HepG2 (cell line): ENCODE measurements at regions of chr3 and their contacts with region 1.

Region 1: DNA sequence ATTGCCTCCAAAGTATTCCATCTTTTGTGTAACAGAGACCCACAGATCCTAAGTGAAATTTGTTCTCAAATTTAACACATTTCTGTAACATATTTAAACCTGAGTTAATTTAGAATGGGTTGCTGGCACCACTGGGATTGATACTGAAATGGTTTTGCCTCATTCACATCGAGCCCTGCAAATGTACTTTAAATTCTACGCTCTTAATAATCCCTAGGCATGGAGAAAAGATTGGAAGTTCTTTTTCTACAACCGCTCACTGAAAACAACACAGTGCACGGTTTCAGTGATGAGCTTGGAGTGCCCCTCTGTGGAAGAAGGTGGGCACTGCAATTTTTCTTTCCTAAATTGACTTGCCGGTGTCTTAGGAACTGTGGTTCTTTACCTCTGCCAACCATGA is 109.9 kb upstream of the ATP11B start:
- DNase-seq: peak; percentile 48
- ATAC-seq: peak; percentile 83
- H3K4me3 ChIP-seq: peak overlapping the region in 1 of 3 experiments; percentile 61; a peak in 1 of 6 replicates
- H3K27ac ChIP-seq: no peak overlapping the region
- H3K4me1 ChIP-seq: peaks cover 7% of the 10 kb centered on the region
- H3K27me3 ChIP-seq: peaks cover 4 to 14% of the 10 kb centered on the region in 2 experiments; a peak in 3 of 5 replicates
- CTCF ChIP-seq: peak; percentile 86
- EP300 ChIP-seq: no peak
- POLR2A ChIP-seq: no peak
- RAD21 ChIP-seq: peak; percentile 78

Region 2: DNA sequence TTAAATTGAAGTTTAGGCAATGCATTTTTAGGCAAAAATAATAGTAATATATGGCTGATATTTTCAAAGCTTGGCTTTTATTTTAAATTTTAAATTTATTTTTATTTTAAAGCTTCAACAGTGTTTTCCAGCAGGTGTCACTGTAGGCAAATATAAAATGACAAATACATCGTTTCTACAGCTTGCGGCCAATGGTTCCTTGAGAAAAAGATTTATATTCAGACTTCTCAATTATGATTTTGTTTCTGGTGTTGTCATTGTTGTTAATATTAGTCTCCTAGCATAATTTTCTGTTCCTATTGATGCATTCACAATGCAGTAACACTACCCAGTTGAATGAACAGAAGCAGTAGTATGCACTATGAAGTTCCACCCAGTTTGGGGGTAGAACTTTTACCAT is 1473.2 kb before region 1 on chr3:
- CTCF ChIA-PET with region 1: interaction called, 7 read pairs
- POLR2A ChIA-PET with region 1: no interaction called
- in situ Hi-C with region 1: no loop called
- intact Hi-C with region 1: loop called (anchors 2 kb)
- DNase-seq: peak; percentile 4
- ATAC-seq: no peak
- H3K4me3 ChIP-seq: no peak overlapping the region
- H3K27ac ChIP-seq: no peak overlapping the region
- H3K4me1 ChIP-seq: no peaks in the 10 kb centered on the region
- H3K27me3 ChIP-seq: no peaks in the 10 kb centered on the region
- CTCF ChIP-seq: no peak
- EP300 ChIP-seq: no peak
- POLR2A ChIP-seq: no peak
- RAD21 ChIP-seq: no peak

Region 3: GRCh38 chr3:181326637-181327223 is 1356.7 kb before region 1 on chr3:
- CTCF ChIA-PET with region 1: interaction called, 6 read pairs
- POLR2A ChIA-PET with region 1: no interaction called
- in situ Hi-C with region 1: no loop called
- intact Hi-C with region 1: loop called (anchors 1 kb)
- DNase-seq: peak; percentile 18
- ATAC-seq: peak; percentile 53; the same call in 2 of the 3 replicates
- H3K4me3 ChIP-seq: no peak overlapping the region
- H3K27ac ChIP-seq: no peak overlapping the region
- H3K4me1 ChIP-seq: no peaks in the 10 kb centered on the region
- H3K27me3 ChIP-seq: no peaks in the 10 kb centered on the region
- CTCF ChIP-seq: peak; percentile 59
- EP300 ChIP-seq: no peak
- POLR2A ChIP-seq: no peak
- RAD21 ChIP-seq: no peak

Region 4: GRCh38 chr3:181709537-181710279 is 973.7 kb before region 1 on chr3:
- CTCF ChIA-PET with region 1: interaction called, 8 read pairs
- POLR2A ChIA-PET with region 1: no interaction called
- in situ Hi-C with region 1: loop called (anchors 5 kb)
- intact Hi-C with region 1: loop called (anchors 1 kb)
- DNase-seq: peak; percentile 19
- ATAC-seq: no peak
- H3K4me3 ChIP-seq: no peak overlapping the region
- H3K27ac ChIP-seq: no peak overlapping the region
- H3K4me1 ChIP-seq: peaks cover 11% of the 10 kb centered on the region; the same call in 1 of the 2 replicates
- H3K27me3 ChIP-seq: peaks cover 4 to 46% of the 10 kb centered on the region in 2 experiments; a peak in 4 of 5 replicates
- CTCF ChIP-seq: peak; percentile 70
- EP300 ChIP-seq: no peak
- POLR2A ChIP-seq: no peak
- RAD21 ChIP-seq: peak; percentile 26; the same call in 1 of the 2 replicates

Region 5: DNA sequence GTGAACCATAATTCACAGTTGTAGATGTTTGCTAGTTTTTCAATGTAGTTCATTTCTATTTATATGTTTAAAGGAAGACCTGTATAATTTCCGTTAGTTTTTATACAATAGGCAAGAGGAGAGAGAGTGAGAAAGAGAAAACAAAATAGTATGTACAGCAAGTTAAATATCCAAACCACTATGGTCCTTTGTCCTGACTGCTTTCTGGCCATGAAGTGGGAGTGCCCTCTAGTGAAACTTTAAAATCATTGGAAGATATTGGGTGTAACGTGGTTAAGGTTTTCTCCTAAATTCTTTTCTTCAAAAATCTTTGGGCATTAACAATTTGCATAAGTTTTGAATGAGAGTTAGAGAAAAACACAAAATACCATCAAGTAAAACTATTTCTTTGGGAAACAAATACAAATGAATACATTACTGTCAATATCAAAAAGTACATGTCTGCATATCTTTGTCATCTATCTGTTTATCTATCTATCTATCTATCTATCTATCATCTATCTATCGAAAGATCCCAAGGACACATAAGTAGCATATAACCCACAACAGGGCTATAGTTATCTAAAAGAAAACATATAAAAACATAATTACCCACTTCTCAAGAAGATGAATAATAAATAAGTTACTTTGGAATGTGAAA is 424.8 kb before region 1 on chr3:
- CTCF ChIA-PET with region 1: no interaction called
- POLR2A ChIA-PET with region 1: no interaction called
- in situ Hi-C with region 1: no loop called
- intact Hi-C with region 1: loop called (anchors 2 kb)
- DNase-seq: peak; percentile 45
- ATAC-seq: peak; percentile 63
- H3K4me3 ChIP-seq: no peak overlapping the region
- H3K27ac ChIP-seq: no peak overlapping the region
- H3K4me1 ChIP-seq: no peaks in the 10 kb centered on the region
- H3K27me3 ChIP-seq: 0 out of 5 replicates have a peak, but pooled peaks cover 0 to 3% of the 10 kb centered on the region in 2 experiments
- CTCF ChIP-seq: peak; percentile 80
- EP300 ChIP-seq: no peak
- POLR2A ChIP-seq: no peak
- RAD21 ChIP-seq: peak; percentile 67

Region 6: DNA sequence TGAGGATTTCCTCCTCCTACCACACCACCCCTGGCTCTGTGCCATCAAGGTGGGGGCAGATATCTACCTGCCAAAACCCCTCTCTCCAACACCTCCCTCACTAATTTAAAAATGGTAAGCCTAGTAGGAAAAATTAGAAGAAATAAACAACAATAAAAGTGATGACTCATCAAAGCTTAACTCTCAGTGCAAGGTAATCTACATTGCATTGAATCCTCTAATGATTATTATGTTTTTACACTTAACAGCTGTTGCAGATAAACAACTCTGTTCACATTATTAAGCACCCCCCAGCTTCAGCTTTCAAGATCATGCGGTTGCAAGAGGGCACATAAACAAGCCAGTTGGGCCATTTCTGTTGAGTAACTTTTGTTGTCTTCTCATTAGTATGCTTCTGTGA is 286.3 kb before region 1 on chr3:
- CTCF ChIA-PET with region 1: no interaction called
- POLR2A ChIA-PET with region 1: no interaction called
- in situ Hi-C with region 1: no loop called
- intact Hi-C with region 1: loop called (anchors 2 kb)
- DNase-seq: no peak
- ATAC-seq: no peak
- H3K4me3 ChIP-seq: no peak overlapping the region
- H3K27ac ChIP-seq: no peak overlapping the region
- H3K4me1 ChIP-seq: no peaks in the 10 kb centered on the region
- H3K27me3 ChIP-seq: no peaks in the 10 kb centered on the region
- CTCF ChIP-seq: no peak
- EP300 ChIP-seq: no peak
- POLR2A ChIP-seq: no peak
- RAD21 ChIP-seq: no peak

Region 7: DNA sequence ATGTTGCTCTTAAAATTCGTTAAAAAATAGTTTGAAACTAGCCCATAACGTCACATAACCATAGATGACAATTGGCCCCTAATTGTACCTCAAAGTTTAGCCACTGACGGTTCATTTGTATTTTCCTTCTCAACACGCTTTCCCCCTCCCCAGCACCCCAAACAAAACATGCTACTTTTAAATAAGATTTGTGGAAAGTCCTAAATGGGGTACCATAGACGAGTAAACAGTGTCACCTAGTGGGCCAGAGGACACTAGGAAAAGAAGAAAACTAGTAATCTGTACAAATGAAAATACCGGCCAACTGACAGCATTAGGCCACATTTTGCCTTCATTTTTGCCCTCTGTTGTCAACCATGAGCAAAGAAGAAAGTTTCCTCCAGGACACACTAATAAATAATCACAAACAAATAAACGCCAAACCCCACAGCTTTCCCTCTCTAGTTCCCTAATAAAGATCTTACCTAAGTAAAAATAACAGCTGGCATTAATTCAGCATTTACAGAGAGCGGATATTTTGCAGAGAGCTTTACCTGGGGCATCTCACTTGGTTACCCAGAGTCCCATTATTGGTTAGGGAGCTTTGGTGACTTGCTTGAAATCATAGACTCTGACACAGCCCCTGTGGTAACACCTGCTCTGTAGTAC is 65.2 kb before region 1 on chr3:
- CTCF ChIA-PET with region 1: no interaction called
- POLR2A ChIA-PET with region 1: no interaction called
- in situ Hi-C with region 1: no loop called
- intact Hi-C with region 1: loop called (anchors 2 kb)
- DNase-seq: peak; percentile 12
- ATAC-seq: peak; percentile 68
- H3K4me3 ChIP-seq: no peak overlapping the region
- H3K27ac ChIP-seq: no peak overlapping the region
- H3K4me1 ChIP-seq: no peaks in the 10 kb centered on the region
- H3K27me3 ChIP-seq: no peaks in the 10 kb centered on the region
- CTCF ChIP-seq: peak; percentile 70
- EP300 ChIP-seq: no peak
- POLR2A ChIP-seq: no peak
- RAD21 ChIP-seq: peak; percentile 53